Esophagus muscularis mucosa (tissue), 4 donors: ENCODE measurements at regions of chr22 and their contacts with region 1.

Region 1: DNA sequence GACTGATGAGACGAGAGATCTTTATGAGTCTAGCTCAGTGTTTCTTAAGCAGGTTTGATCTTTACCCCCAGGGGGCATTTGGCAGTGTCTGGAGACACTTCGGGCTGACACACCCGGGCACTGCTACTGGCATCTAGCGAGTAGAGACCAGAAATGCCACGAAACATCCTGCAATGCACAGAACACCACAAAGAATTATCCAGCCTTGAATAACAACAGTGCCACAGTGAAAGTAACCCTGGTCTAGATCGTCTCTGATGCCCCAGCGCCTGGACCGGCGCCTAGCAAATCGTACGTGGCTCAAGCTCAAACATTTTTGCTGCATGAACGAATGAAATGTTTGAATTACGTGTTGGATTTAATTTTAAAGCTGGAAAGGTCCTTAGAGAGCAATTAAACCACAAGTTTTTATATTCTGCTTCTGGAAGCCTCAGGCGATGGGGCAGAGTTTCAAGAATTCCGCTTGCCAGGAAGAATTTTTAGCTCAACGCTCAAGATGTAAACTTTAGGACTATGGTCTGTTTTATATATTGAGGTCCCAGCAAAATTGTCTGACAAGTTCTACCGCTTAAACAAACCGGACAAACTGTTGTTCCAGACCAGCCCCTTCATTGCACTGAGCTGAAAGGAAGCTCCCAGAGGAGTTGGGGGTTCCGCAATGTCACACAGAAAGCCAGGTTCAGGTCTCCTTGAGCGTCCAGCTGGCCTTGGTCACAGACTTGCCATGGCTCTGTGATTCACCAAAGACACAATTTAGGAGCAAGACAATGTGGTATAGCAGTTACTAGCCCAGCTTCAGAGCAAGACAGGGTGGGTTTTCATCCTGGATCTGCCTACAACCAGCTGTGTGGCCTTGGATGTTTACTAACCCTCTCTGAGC is 44.2 kb upstream of the SMTN start:
- DNase-seq: no peak
- H3K4me3 ChIP-seq: peak overlapping the region; percentile 22 to 49 (median 37)
- H3K27ac ChIP-seq: peak overlapping the region; percentile 87 to 92 (median 90)
- H3K4me1 ChIP-seq: peaks cover 23 to 58% (median 55%) of the 10 kb centered on the region in 4 donors
- H3K27me3 ChIP-seq: no peaks in the 10 kb centered on the region
- CTCF ChIP-seq: peak in 1 of 3 experiments; percentile 6
- EP300 ChIP-seq: no peak
- POLR2A ChIP-seq: no peak

Region 2: GRCh38 chr22:30968924-30969539 is 67.9 kb before region 1 on chr22 and contains the start of gene TUG1:
- intact Hi-C with region 1: loop called (anchors 5 kb)
- DNase-seq: peak; percentile 100
- H3K4me3 ChIP-seq: peak within 1 kb of the TSS; percentile 86 to 92 (median 92)
- H3K27ac ChIP-seq: peak within 1 kb of the TSS; percentile 95 to 98 (median 98)
- H3K4me1 ChIP-seq: peaks cover 18 to 57% (median 33%) of the 10 kb centered on the region in 4 donors
- H3K27me3 ChIP-seq: no peaks in the 10 kb centered on the region
- CTCF ChIP-seq: no peak
- EP300 ChIP-seq: no peak
- POLR2A ChIP-seq: peak; percentile 83
- total RNA-seq, gene TUG1: 53.0 to 78.5 (median 64.1) TPM

Region 3: DNA sequence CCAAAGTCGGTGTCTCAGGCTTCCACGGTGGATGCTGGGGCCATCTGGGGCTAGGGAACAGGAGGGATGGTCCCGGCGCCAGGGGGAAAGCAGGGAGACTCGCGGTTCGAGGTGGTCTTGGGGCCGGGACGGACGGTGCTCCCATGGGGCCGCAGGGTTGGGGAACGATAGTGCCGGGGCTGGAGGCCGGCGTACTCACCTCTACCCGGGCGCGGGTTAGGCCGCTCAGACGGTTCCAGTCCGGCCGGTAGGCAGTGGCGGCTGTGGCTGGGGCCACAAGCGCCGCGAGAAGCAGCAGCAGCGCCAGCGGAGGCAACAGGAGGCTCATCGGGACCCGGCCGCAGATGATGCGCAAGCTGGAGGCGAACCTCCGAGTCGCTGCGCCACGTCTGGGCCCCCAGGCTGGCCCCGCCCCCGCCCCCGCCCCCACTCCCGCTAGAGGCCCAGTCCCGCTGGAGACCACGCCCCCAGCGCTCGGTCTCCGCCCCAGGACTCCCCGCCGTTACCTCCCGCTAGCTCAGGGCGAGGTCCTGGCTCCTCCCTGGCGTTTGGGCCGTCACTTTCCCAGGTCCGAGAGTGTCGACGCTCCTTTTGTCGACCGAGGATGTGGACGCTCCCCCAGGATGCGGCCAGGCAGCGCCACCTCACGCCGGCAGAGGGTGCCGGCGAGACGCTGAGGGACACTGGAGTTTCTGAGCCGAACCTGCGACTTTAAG is 70.4 kb after region 1 on chr22 and contains the start of gene SELENOM:
- intact Hi-C with region 1: no loop called
- DNase-seq: peak; percentile 99
- H3K4me3 ChIP-seq: peak within 1 kb of the TSS; percentile 90 to 95 (median 91)
- H3K27ac ChIP-seq: peak within 1 kb of the TSS; percentile 98 to 99 (median 99)
- H3K4me1 ChIP-seq: peaks cover 47 to 54% (median 52%) of the 10 kb centered on the region in 4 donors
- H3K27me3 ChIP-seq: no peaks in the 10 kb centered on the region
- CTCF ChIP-seq: peak; percentile 95 to 99 (median 97)
- EP300 ChIP-seq: no peak
- POLR2A ChIP-seq: peak; percentile 83
- total RNA-seq, gene SELENOM: 1,118 to 1,733 (median 1,416) TPM